ENCODE measurements at regions of chr2 and their contacts with region 1.

Region 1: DNA sequence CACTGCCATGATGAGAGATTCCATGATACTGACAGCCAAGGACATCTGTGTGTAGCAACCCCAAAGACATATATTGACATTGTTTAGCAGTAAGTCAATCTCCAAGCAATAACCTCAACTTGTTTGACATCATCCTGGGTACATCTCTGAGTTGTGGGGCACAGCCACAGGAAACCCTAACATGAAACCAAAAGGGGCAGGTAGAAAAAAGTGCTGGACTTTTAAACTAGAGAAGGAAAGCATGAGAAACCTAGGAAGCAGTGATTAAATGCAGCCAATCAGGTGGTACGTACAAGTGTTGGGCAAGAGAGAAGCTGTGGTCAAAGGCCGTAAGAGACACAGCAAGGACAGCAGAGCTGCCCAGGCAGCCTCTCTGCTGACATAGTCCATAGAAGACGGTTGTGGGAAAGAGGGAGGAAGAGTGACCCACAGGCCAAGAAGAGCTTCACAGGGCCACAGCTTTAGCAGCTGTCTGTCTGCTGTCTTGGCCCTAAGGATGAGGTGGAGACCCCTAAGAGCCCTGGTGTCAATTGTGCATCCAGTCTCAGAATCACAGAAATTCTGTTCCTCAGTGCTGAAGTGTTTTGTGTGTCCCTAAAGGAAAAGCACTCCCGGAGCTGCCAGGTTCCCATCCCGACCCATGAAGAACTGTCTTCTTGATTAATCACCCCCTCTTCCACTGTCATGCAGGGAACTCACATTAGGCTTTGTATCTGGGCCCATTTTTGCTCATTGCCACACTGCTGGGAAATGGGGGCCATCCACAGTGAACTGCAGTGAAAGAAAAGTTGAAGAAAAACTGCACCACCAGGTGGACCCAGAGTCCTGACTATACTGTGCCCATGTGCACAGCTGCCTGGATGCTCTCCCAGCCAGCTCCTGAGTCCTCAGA is 25.4 kb upstream of the CHN1 start:
- DNase-seq: no peak
- H3K4me3 ChIP-seq: no peak overlapping the region
- H3K4me3 Mint-ChIP-seq: no peak overlapping the region
- H3K27ac ChIP-seq: no peak overlapping the region
- H3K27ac Mint-ChIP-seq: no peak overlapping the region
- H3K4me1 ChIP-seq: no peaks in the 10 kb centered on the region
- H3K4me1 Mint-ChIP-seq: no peaks in the 10 kb centered on the region
- H3K27me3 ChIP-seq: no peaks in the 10 kb centered on the region
- H3K27me3 Mint-ChIP-seq: no peaks in the 10 kb centered on the region

Region 2: GRCh38 chr2:174856447-174856846 is 174.2 kb before region 1 on chr2:
- CTCF ChIA-PET with region 1: no interaction called
- POLR2A ChIA-PET with region 1: no interaction called
- intact Hi-C with region 1: no loop called
- DNase-seq: no peak
- H3K4me3 ChIP-seq: no peak overlapping the region
- H3K4me3 Mint-ChIP-seq: no peak overlapping the region
- H3K27ac ChIP-seq: no peak overlapping the region
- H3K27ac Mint-ChIP-seq: no peak overlapping the region
- H3K4me1 ChIP-seq: no peaks in the 10 kb centered on the region
- H3K4me1 Mint-ChIP-seq: no peaks in the 10 kb centered on the region
- H3K27me3 ChIP-seq: no peaks in the 10 kb centered on the region
- H3K27me3 Mint-ChIP-seq: no peaks in the 10 kb centered on the region

Region 3: DNA sequence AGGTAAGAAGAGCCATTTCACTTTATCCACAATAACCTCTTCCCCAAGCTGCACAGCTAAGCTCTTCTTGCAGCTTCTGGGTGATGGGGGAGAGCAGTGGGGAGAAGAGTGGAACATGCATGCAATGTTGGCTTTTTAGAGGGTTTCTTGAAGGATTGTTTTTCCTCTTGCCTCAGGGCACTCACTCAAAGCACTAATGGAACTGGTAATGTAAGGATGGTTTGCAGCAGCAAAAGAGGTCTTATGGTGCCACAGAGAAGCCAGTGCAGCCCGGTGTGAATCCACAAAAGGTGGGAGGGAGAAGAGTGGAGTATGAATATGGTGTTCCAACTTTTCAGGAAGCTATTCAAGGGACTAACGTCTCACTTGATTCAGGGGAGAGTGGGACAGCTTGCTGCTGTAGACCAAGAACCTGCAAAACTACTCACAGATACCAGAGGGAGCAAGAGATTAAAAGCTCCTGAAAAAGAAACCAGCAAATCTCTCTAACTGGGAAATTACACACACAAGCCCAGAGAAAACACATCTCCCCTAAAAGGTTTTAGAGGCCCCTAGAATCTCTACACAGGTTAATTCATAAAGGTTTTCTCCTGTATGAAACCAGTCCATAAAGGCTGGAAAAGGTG is 141.9 kb before region 1 on chr2:
- CTCF ChIA-PET with region 1: no interaction called
- POLR2A ChIA-PET with region 1: no interaction called
- intact Hi-C with region 1: no loop called
- DNase-seq: no peak
- H3K4me3 ChIP-seq: no peak overlapping the region
- H3K4me3 Mint-ChIP-seq: no peak overlapping the region
- H3K27ac ChIP-seq: no peak overlapping the region
- H3K27ac Mint-ChIP-seq: no peak overlapping the region
- H3K4me1 ChIP-seq: no peaks in the 10 kb centered on the region
- H3K4me1 Mint-ChIP-seq: peaks cover 0 to 2% (median 0%) of the 10 kb centered on the region in 4 donors
- H3K27me3 ChIP-seq: no peaks in the 10 kb centered on the region
- H3K27me3 Mint-ChIP-seq: no peaks in the 10 kb centered on the region

Region 4: DNA sequence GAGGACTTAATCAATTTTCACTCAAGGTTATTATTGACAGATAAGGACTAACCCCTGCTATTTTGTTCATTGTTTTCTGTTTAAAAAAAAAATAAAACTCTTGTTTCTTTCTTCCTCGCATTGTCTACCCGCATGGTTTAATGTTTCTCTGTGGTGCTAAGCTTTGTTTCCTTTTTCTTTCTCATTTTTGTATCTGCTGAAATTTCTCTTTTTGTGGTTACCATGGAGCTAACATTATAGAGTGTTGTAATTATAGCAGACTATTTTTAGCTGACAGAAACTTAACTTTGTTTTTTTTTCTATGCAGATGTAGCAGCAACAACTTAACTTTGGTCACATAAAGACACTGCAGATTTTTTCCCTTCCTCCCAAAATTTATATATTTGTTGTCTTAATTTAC is 17.6 kb after region 1 on chr2:
- CTCF ChIA-PET with region 1: no interaction called
- POLR2A ChIA-PET with region 1: no interaction called
- intact Hi-C with region 1: no loop called
- DNase-seq: no peak
- H3K4me3 ChIP-seq: no peak overlapping the region
- H3K4me3 Mint-ChIP-seq: no peak overlapping the region
- H3K27ac ChIP-seq: no peak overlapping the region
- H3K27ac Mint-ChIP-seq: no peak overlapping the region
- H3K4me1 ChIP-seq: no peaks in the 10 kb centered on the region
- H3K4me1 Mint-ChIP-seq: no peaks in the 10 kb centered on the region
- H3K27me3 ChIP-seq: no peaks in the 10 kb centered on the region
- H3K27me3 Mint-ChIP-seq: no peaks in the 10 kb centered on the region

Region 5: GRCh38 chr2:175181104-175181876 is 150.7 kb after region 1 on chr2 and contains the start of gene ATP5MC3:
- CTCF ChIA-PET with region 1: no interaction called
- POLR2A ChIA-PET with region 1: no interaction called
- intact Hi-C with region 1: loop called (anchors 10 kb)
- DNase-seq: peak; percentile 89 to 91 (median 90)
- H3K4me3 ChIP-seq: peak within 1 kb of the TSS; percentile 59 to 84
- H3K4me3 Mint-ChIP-seq: peak within 1 kb of the TSS; percentile 80 to 95 (median 93)
- H3K27ac ChIP-seq: peak within 1 kb of the TSS; percentile 83
- H3K27ac Mint-ChIP-seq: peak within 1 kb of the TSS; percentile 79 to 98 (median 95)
- H3K4me1 ChIP-seq: peaks cover 25% of the 10 kb centered on the region
- H3K4me1 Mint-ChIP-seq: peaks cover 14 to 22% (median 18%) of the 10 kb centered on the region in 4 donors
- H3K27me3 ChIP-seq: no peaks in the 10 kb centered on the region
- H3K27me3 Mint-ChIP-seq: peaks cover 0 to 2% of the 10 kb centered on the region in 2 donors
- total RNA-seq, gene ATP5MC3: 77.0 to 81.3 TPM